ENCODE measurements at regions of chr16 and their contacts with region 1.

Region 1: GRCh38 chr16:47037746-47038458 is 64.4 kb upstream of the DNAJA2 start:
- ATAC-seq: peak; percentile 93 to 97 (median 95)
- H3K4me3 ChIP-seq: peak overlapping the region; percentile 37 to 51 (median 45)
- H3K27ac ChIP-seq: no peak overlapping the region
- H3K4me1 ChIP-seq: peaks cover 0 to 10% of the 10 kb centered on the region in 2 donors

Region 2: DNA sequence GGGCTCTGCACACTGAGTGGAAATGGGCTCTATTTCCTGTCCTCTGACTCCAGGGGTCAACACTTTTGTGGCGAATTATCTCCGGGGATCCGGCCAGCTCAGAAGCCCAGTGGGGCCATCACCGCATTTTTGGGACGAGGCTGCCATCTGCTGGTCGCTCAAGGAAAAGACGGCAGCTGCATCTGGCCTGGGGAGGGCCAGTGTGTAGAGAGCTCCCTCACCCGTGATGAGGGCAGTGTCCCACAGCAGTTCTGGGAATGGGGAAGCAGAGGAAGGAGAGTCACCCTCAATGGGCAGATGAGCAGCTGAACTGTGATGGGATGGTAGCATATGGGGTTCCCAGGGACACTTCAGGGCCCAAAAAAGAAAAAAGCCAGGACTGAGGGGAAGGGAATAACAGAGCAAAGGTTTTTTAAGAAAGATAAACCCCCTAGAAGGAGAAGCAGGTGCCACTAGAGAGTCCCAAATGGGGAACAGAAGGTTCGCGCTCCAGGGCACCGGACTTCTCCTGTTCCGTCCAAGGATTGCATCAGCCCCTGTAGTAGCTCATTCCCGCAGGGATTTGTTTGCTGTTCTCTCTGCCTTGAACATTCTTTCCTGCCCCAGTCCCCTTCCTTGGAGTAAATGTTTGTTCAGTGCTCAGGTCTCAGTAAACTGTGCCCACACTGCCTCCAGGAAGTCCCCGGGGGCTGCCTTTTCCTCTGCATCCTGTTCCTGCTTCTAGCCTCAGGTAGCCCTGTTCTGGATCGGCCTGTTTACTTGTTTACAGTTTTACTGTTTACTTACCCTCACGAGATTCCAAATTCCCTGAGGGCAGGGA is 1127.2 kb after region 1 on chr16:
- in situ Hi-C with region 1: loop called in 1 of 9 experiments (anchors 10 kb)
- ATAC-seq: peak; percentile 88 to 100 (median 99)
- H3K4me3 ChIP-seq: no peak overlapping the region
- H3K27ac ChIP-seq: no peak overlapping the region
- H3K4me1 ChIP-seq: peaks cover 0 to 2% of the 10 kb centered on the region in 2 donors